Colonic mucosa (tissue), 4 donors: ENCODE measurements at regions of chr5 and their contacts with region 1.

Region 1: DNA sequence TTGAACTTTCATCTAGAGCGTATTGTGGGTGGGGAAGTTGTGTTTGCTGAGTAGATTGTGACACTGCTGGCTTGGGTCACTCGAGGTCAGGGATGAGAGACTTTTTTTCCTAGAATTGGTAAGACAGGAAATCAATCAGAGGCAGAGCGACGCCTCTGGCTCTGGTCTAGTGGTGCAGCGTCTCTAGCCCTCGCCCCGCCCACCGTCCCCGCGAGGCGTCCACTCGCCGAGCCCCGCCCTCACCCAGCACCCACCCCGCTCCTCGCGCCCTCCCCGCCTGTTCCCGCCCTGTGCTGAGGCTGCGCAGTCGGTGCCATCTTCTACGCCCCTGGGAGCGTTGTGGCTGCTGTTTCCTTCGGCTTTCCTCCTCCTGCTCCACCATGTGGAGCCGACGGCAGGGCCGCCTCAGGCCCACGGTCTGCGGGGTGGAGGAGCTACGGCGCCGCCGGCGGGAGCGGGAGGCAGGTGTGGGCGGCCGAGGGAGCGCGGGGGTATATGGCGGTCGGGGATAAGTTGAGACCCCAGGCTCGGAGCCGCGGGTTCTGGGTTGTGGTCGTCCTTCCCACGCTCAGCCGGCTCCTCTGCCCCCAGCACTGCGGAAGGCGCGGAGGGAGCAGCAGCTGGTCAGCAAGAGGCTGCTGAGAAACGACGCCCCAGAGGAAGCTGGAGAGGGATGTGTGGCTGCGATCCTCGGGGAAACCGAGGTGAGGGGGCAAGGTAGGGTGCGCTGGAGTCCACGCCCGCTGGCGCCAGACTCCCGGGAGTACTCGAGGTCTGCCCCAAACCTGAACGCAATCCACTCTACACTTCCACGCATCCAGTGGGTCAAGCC is at the start of gene TMCO6:
- DNase-seq: peak; percentile 99
- H3K4me3 ChIP-seq: peak within 1 kb of the TSS; percentile 82
- H3K27ac ChIP-seq: peak within 1 kb of the TSS; percentile 95
- H3K4me1 ChIP-seq: no peaks in the 10 kb centered on the region
- H3K27me3 ChIP-seq: no peaks in the 10 kb centered on the region
- CTCF ChIP-seq: peak; percentile 77
- total RNA-seq, gene TMCO6: 8.7 to 18.9 TPM

Region 2: DNA sequence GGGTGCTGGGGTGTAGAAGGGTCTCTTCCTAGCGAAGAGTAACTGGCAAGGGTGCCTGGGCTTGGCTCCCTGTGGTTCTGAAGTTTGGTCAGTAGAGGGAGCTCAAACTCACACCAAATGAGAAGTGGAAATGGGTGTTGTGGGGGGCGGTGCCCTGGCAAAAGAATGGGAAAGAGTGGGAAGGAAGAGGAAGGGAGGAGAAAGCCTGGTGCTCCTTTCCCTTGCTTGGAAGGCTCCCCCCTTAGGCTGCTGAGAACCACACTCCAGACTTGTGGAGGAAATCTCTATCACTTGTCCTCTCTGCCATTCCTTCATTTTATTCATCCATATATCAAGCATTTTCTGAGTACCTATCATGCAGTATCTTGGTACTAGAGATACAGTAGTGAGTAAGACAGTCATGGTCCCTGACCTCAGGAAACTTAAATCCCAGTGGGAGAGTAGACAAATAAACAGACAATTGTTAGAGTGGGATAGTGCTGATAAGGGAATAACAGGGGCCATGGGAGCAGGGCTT is 266.3 kb before region 1 on chr5:
- intact Hi-C with region 1: loop called (anchors 5 kb)
- DNase-seq: peak; percentile 81
- H3K4me3 ChIP-seq: no peak overlapping the region
- H3K27ac ChIP-seq: no peak overlapping the region
- H3K4me1 ChIP-seq: peaks cover 5% of the 10 kb centered on the region
- H3K27me3 ChIP-seq: no peaks in the 10 kb centered on the region
- CTCF ChIP-seq: peak; percentile 68

Region 3: GRCh38 chr5:140420226-140420570 is 219.2 kb before region 1 on chr5:
- intact Hi-C with region 1: no loop called
- DNase-seq: no peak
- H3K4me3 ChIP-seq: no peak overlapping the region
- H3K27ac ChIP-seq: no peak overlapping the region
- H3K4me1 ChIP-seq: no peaks in the 10 kb centered on the region
- H3K27me3 ChIP-seq: no peaks in the 10 kb centered on the region
- CTCF ChIP-seq: no peak

Region 4: DNA sequence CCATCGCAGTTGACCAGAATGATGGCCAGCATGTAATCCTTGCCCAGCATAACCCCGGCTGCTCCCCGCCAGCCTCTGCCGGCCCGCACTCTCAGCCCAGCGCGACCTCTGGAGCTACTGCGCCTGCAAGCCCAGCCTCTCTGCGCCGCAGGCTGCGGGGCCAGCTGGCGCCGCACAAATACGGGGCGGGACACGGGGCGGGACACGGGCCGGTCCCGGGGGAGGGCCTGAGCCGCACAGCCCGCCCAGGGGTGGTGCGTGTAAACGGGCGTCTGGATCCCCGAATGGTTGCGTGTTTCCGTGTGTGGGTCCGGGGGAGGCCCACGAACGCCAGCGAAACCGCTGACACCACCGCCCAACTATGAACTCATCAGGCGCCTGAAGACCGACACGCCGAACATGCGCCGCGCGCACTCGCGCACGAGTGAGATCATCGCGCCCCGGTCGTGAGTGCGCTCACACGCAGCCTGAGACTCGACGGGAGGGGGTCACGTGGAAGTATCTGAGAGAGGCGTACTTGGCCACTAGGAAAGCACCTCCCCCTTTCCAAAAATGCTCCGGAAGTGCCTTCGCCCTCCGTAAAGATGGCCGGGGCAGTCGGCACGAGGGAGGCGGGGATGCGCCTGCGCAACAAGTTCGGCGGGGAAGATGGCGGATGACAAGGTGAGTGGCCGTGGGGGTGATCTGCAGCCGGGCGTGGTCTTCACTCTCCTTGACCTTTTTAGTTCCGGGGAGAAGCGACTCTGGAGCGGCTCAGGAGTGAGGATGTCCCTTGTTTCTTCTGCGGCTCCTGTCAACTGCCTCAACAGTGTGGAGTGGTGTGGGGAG is 75.0 kb before region 1 on chr5 and contains the starts of genes APBB3 and SLC35A4:
- intact Hi-C with region 1: loop called (anchors 2 kb)
- DNase-seq: peak; percentile 97
- H3K4me3 ChIP-seq: peak within 1 kb of the TSS; percentile 72
- H3K27ac ChIP-seq: peak within 1 kb of the TSS; percentile 90
- H3K4me1 ChIP-seq: peaks cover 13% of the 10 kb centered on the region
- H3K27me3 ChIP-seq: no peaks in the 10 kb centered on the region
- CTCF ChIP-seq: no peak
- total RNA-seq, gene APBB3: 11.0 to 17.0 TPM
- total RNA-seq, gene SLC35A4: 78.1 to 129 TPM